CD14-positive monocyte (primary cell): ENCODE measurements at regions of chr3 and their contacts with region 1.

Region 1: GRCh38 chr3:129645290-129645689 is 38.8 kb upstream of the PLXND1 start:
- DNase-seq: peak; percentile 19 to 32 (median 24)
- H3K4me3 ChIP-seq: no peak overlapping the region
- H3K4me3 Mint-ChIP-seq: no peak overlapping the region
- H3K27ac ChIP-seq: peak overlapping the region in 1 of 2 donors; percentile 38
- H3K27ac Mint-ChIP-seq: peak overlapping the region in 4 of 7 donors; percentile 13 to 73 (median 46)
- H3K4me1 ChIP-seq: peaks cover 8 to 12% of the 10 kb centered on the region in 2 donors
- H3K4me1 Mint-ChIP-seq: peaks cover 10% of the 10 kb centered on the region
- H3K27me3 ChIP-seq: no peaks in the 10 kb centered on the region
- H3K27me3 Mint-ChIP-seq: peaks cover 0 to 5% (median 2%) of the 10 kb centered on the region in 3 donors
- CTCF ChIP-seq: no peak

Region 2: DNA sequence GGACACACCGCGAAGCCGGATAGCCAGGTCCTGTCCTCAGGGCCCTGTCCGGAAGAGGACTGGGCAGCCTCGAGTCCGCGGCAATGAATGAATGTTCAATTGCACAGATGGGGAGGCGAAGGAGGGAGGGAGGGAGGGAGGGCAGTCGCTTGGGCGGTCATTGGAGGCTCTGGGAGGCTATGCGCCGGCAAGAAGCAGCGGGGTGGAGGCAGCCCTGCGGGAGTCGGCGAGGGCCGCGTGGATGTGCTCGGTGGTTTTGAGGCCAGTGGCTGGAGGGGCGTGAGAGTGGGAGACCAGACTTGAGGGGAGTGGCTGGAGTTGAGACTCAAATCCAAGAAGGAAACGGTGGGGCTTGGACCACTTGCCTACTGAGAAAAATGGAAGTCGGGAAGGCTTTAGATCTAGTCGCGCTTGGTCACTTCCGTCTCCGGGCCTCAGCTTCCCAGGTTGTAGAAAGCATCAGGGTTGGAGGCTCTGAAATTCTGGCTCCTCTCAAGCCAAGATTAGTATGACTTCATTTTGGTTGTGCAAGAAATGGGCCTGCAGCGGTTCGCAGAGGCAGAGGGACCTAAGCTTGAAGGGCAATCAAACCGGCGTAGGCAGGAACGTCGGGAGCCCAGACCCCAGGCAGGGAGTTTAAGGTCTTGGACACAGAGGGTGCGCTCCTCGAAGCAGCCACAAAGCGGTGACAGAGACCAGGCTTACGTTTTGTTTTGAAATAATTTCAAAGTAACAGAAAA is 17.7 kb before region 1 on chr3:
- intact Hi-C with region 1: no loop called
- DNase-seq: peak; percentile 74 to 89 (median 84)
- H3K4me3 ChIP-seq: peak overlapping the region; percentile 28 to 77 (median 54)
- H3K4me3 Mint-ChIP-seq: peak overlapping the region; percentile 86 to 94
- H3K27ac ChIP-seq: peak overlapping the region; percentile 93 to 94
- H3K27ac Mint-ChIP-seq: peak overlapping the region; percentile 93 to 99 (median 97)
- H3K4me1 ChIP-seq: peaks cover 62 to 66% of the 10 kb centered on the region in 2 donors
- H3K4me1 Mint-ChIP-seq: peaks cover 51% of the 10 kb centered on the region
- H3K27me3 ChIP-seq: no peaks in the 10 kb centered on the region
- H3K27me3 Mint-ChIP-seq: peaks cover 0 to 2% (median 0%) of the 10 kb centered on the region in 3 donors
- CTCF ChIP-seq: peak; percentile 77

Region 3: DNA sequence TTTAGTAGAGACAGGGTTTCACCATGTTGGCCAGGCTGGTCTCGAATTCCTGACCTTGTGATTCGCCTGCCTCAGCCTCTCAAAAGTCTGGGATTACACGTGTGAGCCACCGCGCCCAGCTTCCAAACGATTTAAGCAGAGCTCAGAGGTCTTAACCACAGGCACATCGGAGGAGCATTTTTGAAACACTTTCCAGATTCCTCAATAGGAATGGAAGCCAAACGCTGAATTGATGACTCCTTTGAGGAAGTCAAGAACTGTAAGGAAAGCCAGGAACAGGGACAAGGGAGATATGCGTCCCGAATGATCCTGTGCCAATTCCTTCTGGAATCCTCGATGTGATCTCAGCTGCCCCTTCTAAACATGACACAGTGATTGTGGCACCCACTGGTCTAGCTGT is 369.2 kb after region 1 on chr3:
- intact Hi-C with region 1: loop called in 1 of 2 experiments (anchors 10 kb)
- DNase-seq: no peak
- H3K4me3 ChIP-seq: no peak overlapping the region
- H3K4me3 Mint-ChIP-seq: no peak overlapping the region
- H3K27ac ChIP-seq: no peak overlapping the region
- H3K27ac Mint-ChIP-seq: no peak overlapping the region
- H3K4me1 ChIP-seq: no peaks in the 10 kb centered on the region
- H3K4me1 Mint-ChIP-seq: no peaks in the 10 kb centered on the region
- H3K27me3 ChIP-seq: no peaks in the 10 kb centered on the region
- H3K27me3 Mint-ChIP-seq: peaks cover 0 to 3% (median 2%) of the 10 kb centered on the region in 3 donors
- CTCF ChIP-seq: no peak